CD14-positive monocyte (primary cell): ENCODE measurements at regions of chr22 and their contacts with region 1.

Region 1: GRCh38 chr22:37457093-37457893 is 28.9 kb downstream of the MFNG start:
- DNase-seq: peak; percentile 51 to 71 (median 68)
- H3K4me3 ChIP-seq: no peak overlapping the region
- H3K4me3 Mint-ChIP-seq: no peak overlapping the region
- H3K27ac ChIP-seq: no peak overlapping the region
- H3K27ac Mint-ChIP-seq: peak overlapping the region in 1 of 7 donors; percentile 39
- H3K4me1 ChIP-seq: no peaks in the 10 kb centered on the region
- H3K4me1 Mint-ChIP-seq: peaks cover 5% of the 10 kb centered on the region
- H3K27me3 ChIP-seq: no peaks in the 10 kb centered on the region
- H3K27me3 Mint-ChIP-seq: peaks cover 0 to 21% (median 12%) of the 10 kb centered on the region in 3 donors
- CTCF ChIP-seq: peak; percentile 97

Region 2: DNA sequence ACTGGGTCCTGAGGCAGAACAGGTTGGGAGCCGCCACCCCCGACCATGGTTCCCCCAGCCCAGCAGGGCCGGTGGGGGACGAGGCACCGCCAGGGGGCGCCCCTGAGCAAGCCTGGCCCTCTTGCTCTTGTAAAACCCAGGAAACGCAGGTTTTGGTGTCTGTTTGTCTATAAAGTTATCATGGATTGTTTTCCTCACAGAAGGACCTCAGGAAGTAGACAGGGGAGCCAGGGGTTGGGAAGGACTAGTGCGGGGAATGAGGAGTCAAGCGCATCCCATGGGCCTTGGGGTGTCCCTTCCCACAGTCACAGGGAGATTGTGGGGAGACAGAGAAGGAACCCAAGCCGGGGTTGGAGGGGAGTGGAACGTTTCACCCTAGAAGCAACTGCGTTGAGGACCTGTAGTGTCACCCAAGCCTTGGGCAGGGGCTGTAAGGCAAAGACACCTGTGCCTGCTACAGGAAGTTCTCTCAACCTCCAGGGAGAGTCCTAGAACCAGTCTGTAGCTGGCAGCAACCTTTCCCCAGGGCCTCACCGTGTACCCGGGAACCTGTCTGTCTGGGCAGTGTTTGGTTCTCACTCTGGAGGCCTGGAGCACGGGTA is 379.3 kb before region 1 on chr22:
- intact Hi-C with region 1: loop called in 1 of 2 experiments (anchors 5 kb)
- DNase-seq: peak; percentile 42 to 59 (median 55)
- H3K4me3 ChIP-seq: no peak overlapping the region
- H3K4me3 Mint-ChIP-seq: no peak overlapping the region
- H3K27ac ChIP-seq: no peak overlapping the region
- H3K27ac Mint-ChIP-seq: no peak overlapping the region
- H3K4me1 ChIP-seq: peaks cover 5 to 10% of the 10 kb centered on the region in 2 donors
- H3K4me1 Mint-ChIP-seq: peaks cover 18% of the 10 kb centered on the region
- H3K27me3 ChIP-seq: peaks cover 0 to 2% of the 10 kb centered on the region in 2 donors
- H3K27me3 Mint-ChIP-seq: peaks cover 7 to 9% (median 7%) of the 10 kb centered on the region in 3 donors
- CTCF ChIP-seq: peak; percentile 99

Region 3: GRCh38 chr22:37166675-37167066 is 290.6 kb before region 1 on chr22:
- intact Hi-C with region 1: loop called (anchors 2 to 5 kb)
- DNase-seq: peak; percentile 73 to 78 (median 73)
- H3K4me3 ChIP-seq: no peak overlapping the region
- H3K4me3 Mint-ChIP-seq: peak overlapping the region; percentile 34 to 61
- H3K27ac ChIP-seq: no peak overlapping the region
- H3K27ac Mint-ChIP-seq: peak overlapping the region in 1 of 7 donors; percentile 67
- H3K4me1 ChIP-seq: peaks cover 0 to 4% of the 10 kb centered on the region in 2 donors
- H3K4me1 Mint-ChIP-seq: peaks cover 4% of the 10 kb centered on the region
- H3K27me3 ChIP-seq: no peaks in the 10 kb centered on the region
- H3K27me3 Mint-ChIP-seq: peaks cover 7 to 12% (median 7%) of the 10 kb centered on the region in 3 donors
- CTCF ChIP-seq: peak; percentile 88

Region 4: GRCh38 chr22:37267135-37267587 is 190.1 kb before region 1 on chr22:
- intact Hi-C with region 1: loop called in 1 of 2 experiments (anchors 2 kb)
- DNase-seq: peak in 2 of 3 donors; percentile 43 to 55
- H3K4me3 ChIP-seq: peak overlapping the region; percentile 21 to 82 (median 57)
- H3K4me3 Mint-ChIP-seq: peak overlapping the region; percentile 77 to 87
- H3K27ac ChIP-seq: peak overlapping the region; percentile 89 to 94
- H3K27ac Mint-ChIP-seq: peak overlapping the region; percentile 95 to 98 (median 97)
- H3K4me1 ChIP-seq: peaks cover 57 to 58% of the 10 kb centered on the region in 2 donors
- H3K4me1 Mint-ChIP-seq: peaks cover 56% of the 10 kb centered on the region
- H3K27me3 ChIP-seq: no peaks in the 10 kb centered on the region
- H3K27me3 Mint-ChIP-seq: peaks cover 2 to 15% (median 7%) of the 10 kb centered on the region in 3 donors
- CTCF ChIP-seq: peak; percentile 99

Region 5: DNA sequence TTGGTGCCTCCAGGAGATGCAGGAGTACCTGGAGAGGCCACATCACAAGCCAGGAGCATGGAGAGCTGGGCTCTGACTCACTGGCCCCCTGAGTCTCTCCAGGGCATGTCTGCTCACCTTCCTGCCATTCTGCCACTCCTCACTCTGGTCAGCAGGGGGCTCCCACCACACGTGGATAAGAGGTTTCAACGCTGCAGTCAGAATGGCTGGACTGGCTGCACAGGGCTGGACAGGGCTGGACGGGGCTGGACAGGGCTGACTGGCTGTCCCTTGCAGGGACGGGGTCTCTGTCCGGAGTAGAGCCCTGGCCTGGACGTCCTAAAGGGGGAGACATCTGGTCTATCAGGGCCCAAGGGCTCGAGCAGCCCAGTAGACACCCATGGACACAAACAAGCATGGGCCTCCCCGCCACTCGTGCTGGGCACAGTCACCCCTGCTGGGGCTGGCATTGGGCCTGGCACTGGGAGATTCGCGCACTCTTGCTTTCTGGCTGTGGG is 140.4 kb before region 1 on chr22:
- intact Hi-C with region 1: loop called (anchors 1 to 2 kb)
- DNase-seq: peak; percentile 76 to 88 (median 77)
- H3K4me3 ChIP-seq: no peak overlapping the region
- H3K4me3 Mint-ChIP-seq: no peak overlapping the region
- H3K27ac ChIP-seq: no peak overlapping the region
- H3K27ac Mint-ChIP-seq: peak overlapping the region in 1 of 7 donors; percentile 19
- H3K4me1 ChIP-seq: peaks cover 58 to 67% of the 10 kb centered on the region in 2 donors
- H3K4me1 Mint-ChIP-seq: peaks cover 60% of the 10 kb centered on the region
- H3K27me3 ChIP-seq: no peaks in the 10 kb centered on the region
- H3K27me3 Mint-ChIP-seq: peaks cover 8 to 16% (median 8%) of the 10 kb centered on the region in 3 donors
- CTCF ChIP-seq: peak; percentile 85

Region 6: DNA sequence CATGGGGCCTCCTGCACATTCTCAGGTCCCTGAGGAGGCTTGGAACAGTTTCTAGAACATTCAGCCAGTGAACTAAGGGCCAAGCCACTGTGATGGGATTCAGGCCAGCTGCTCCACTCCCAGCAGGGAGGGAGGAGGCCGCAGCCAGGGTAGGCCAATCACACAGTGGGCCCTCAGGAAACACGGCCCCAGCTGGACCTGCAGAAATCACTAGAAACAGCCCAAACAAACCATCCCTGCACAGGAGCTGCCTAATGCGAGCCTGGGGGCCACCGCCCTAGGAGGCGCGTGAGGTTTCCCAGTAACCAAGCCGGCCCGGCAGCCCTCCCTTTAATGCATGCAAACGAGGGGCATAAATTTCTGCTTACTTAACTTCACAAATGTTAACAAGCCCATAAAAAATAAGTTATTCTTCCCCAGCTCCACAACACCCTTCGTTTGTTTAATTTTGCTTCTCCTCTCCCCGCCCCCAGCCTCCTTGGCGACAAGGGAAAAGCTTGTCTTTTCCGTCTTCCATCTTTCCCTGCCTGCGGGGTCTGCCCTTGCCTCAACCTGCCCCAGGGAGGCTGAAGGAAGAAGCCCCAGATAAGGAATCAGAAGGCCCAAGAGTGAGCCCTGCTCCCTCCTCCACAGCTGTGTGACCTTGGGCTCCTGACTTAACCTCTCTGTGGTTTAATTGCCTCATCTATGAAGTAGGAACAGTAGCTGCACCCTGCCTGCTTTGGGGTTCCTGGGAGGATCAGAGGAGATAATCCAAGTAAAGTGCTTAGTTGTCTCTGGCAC is 55.7 kb before region 1 on chr22:
- intact Hi-C with region 1: no loop called
- DNase-seq: no peak
- H3K4me3 ChIP-seq: no peak overlapping the region
- H3K4me3 Mint-ChIP-seq: no peak overlapping the region
- H3K27ac ChIP-seq: no peak overlapping the region
- H3K27ac Mint-ChIP-seq: no peak overlapping the region
- H3K4me1 ChIP-seq: no peaks in the 10 kb centered on the region
- H3K4me1 Mint-ChIP-seq: no peaks in the 10 kb centered on the region
- H3K27me3 ChIP-seq: no peaks in the 10 kb centered on the region
- H3K27me3 Mint-ChIP-seq: peaks cover 7 to 24% (median 15%) of the 10 kb centered on the region in 3 donors
- CTCF ChIP-seq: no peak